Calu3 (cell line): ENCODE measurements at regions of chr16 and their contacts with region 1.

Region 1: DNA sequence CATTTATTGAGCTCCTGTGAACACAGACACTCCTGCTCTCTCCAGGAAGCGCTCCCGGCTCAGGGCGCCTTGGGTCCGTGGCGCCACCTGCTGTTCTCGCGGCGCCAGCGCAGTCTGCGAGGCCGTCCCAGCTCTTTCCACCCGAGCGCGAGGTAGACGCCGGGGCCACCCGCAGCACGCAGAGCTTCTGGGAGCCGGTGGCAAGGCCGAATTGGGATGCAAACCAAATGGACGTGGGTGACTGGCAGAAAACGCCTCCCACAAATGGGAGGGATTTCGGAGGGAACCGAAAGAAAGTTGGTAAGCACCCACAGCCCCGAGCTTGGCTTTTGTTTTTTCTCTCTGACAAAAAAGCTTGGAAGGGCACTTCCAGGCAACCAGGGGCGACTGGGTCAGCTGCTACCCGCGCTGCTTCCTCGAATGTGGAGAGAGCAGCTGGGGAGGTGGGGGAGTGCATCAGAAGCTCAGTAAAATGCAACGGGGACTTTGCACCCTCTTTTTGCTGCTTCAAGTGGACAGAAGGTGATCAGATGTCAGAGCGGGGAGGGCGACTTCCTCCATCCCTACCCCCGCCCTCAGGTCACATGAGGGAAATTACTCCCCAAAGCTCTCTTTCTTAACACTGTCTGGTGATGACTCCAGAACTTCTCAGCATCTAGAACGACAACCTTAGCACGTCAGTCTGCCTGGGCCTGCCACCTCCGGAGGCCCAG is 13.5 kb upstream of the N4BP1 start:
- DNase-seq: peak; percentile 91
- H3K4me3 Mint-ChIP-seq: peak overlapping the region; percentile 80
- H3K27ac Mint-ChIP-seq: no peak overlapping the region
- H3K4me1 Mint-ChIP-seq: peaks cover 23% of the 10 kb centered on the region
- H3K27me3 Mint-ChIP-seq: peaks cover 17% of the 10 kb centered on the region
- CTCF ChIP-seq: peak; percentile 97

Region 2: DNA sequence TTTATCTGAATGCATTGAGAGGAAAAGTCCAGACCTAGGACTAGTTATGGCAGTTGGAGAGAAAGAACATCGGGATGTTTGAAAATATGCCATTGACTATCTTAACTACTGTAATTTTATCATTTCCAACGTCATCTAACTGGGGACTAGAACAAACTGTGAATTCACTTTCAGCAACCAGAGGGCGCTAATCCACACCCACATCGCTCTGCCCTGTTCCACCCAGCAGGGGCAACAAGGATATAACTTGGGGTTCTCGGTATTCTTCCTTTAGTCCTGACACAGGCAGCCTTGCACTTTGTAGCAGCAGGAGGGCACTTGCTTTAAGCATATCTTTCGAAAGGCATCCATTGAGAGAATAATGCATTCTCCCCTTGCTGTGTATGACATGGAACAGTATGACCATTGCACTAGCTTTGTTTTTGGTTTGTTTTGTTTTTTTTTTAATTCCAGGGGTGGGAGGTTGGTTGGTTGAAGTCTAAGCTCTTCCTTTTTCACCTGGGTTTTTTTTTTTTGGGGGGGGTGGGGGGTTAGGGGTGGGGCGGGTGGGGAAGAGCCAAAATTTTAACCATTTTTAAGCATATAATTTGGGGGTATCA is 269.8 kb before region 1 on chr16:
- CTCF ChIA-PET with region 1: interaction called, 5 read pairs
- intact Hi-C with region 1: loop called (anchors 2 kb)
- DNase-seq: peak; percentile 76
- H3K4me3 Mint-ChIP-seq: no peak overlapping the region
- H3K27ac Mint-ChIP-seq: no peak overlapping the region
- H3K4me1 Mint-ChIP-seq: no peaks in the 10 kb centered on the region
- H3K27me3 Mint-ChIP-seq: no peaks in the 10 kb centered on the region
- CTCF ChIP-seq: peak; percentile 80

Region 3: DNA sequence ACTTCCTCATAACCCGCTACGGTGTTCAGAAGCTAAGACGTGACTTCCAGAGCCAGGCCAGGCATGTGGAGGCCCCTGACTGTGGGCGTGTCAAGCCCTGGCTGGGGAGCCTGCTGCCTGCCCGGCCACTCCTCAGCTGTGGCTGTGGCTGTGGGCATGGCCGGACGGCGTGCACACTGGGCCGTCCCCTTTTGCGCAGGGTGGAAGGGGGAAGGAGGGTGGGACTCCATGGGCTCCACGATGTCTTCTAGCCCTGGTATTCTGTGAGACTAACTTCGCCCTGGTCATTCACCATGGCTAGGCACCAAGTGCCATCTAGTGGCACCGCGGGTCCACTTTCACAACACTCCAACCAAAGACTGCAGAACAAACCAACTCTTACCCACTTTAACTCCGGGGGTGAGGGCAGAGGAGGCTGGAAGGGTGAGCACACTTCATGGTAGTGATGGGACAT is 81.4 kb before region 1 on chr16:
- CTCF ChIA-PET with region 1: interaction called, 16 read pairs
- intact Hi-C with region 1: loop called (anchors 1 kb)
- DNase-seq: peak; percentile 55
- H3K4me3 Mint-ChIP-seq: no peak overlapping the region
- H3K27ac Mint-ChIP-seq: no peak overlapping the region
- H3K4me1 Mint-ChIP-seq: peaks cover 8% of the 10 kb centered on the region
- H3K27me3 Mint-ChIP-seq: no peaks in the 10 kb centered on the region
- CTCF ChIP-seq: peak; percentile 54

Region 4: DNA sequence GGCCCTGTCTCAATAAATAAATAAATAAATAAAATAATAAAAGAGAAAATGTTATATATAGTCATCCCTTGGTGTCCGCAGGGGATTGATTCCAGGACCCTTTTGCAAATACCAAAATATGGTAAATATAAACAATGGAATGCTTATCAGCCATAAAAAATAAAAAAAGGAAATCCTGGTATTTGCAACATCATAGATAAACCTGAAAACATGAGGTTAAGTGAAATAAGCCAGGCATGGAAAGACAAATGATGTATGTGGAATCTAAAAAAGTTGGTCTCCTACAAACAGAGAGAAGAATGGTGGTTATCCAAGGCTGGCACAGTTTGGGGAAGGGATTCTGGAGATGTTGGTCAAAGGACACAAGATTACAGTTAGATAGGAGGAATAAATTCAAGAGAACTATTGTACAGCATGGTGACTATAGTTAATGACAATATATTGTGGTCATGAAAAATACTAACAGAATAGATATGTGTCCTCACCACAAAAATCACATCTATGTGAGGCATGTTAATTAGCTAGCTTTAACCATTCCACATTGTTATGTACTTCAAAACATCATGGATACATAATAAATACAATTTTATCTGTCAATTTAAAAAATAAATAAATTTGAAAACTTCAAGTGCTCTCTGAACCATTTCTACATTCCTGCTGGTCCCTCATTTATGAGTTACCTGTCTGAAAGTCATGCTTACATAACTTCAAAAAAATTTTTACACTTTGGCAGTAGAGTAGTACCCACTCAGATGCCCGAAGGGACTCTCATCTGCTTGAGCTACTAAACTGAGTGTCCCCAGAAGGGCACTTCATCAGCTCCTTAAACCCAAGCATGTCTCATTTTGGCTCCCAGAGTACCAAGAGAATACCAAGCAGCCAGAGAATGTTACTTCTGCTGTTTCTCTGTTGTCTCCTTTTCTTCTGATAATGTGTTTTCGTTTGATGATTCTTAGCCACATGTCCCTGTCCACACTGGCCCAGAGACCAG is 40.1 kb before region 1 on chr16:
- CTCF ChIA-PET with region 1: no interaction called
- intact Hi-C with region 1: no loop called
- DNase-seq: no peak
- H3K4me3 Mint-ChIP-seq: no peak overlapping the region
- H3K27ac Mint-ChIP-seq: no peak overlapping the region
- H3K4me1 Mint-ChIP-seq: peaks cover 19% of the 10 kb centered on the region
- H3K27me3 Mint-ChIP-seq: no peaks in the 10 kb centered on the region
- CTCF ChIP-seq: no peak

Region 5: DNA sequence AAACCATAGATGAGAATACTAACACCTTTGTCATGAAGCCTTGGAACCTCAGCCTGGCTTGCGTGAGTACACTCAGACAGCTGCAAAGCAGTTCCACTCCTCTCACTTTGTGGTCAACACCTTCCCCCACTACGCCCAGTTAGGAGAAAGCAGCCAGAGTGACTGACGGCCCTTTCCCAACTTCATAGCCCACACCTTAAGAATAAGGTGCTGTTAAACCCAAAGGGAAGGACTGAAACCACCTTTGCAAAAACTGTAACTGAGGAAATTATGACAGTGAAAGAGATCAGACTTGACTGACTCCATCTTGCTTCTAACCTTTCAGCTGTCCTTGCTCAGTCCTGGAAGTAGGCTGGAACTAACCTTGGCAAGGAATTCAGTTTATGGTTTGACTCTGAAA is 27.1 kb before region 1 on chr16:
- CTCF ChIA-PET with region 1: no interaction called
- intact Hi-C with region 1: no loop called
- DNase-seq: no peak
- H3K4me3 Mint-ChIP-seq: no peak overlapping the region
- H3K27ac Mint-ChIP-seq: no peak overlapping the region
- H3K4me1 Mint-ChIP-seq: peaks cover 31% of the 10 kb centered on the region
- H3K27me3 Mint-ChIP-seq: no peaks in the 10 kb centered on the region
- CTCF ChIP-seq: no peak